GM18951 (cell line): ENCODE measurements at regions of chr12 and their contacts with region 1.

Region 1: GRCh38 chr12:121438905-121439304 is 39.0 kb downstream of the RNF34 start:
- POLR2A ChIP-seq: no peak

Region 2: GRCh38 chr12:121345151-121345815 is 93.6 kb before region 1 on chr12:
- in situ Hi-C with region 1: loop called (anchors 10 kb)
- POLR2A ChIP-seq: no peak

Region 3: DNA sequence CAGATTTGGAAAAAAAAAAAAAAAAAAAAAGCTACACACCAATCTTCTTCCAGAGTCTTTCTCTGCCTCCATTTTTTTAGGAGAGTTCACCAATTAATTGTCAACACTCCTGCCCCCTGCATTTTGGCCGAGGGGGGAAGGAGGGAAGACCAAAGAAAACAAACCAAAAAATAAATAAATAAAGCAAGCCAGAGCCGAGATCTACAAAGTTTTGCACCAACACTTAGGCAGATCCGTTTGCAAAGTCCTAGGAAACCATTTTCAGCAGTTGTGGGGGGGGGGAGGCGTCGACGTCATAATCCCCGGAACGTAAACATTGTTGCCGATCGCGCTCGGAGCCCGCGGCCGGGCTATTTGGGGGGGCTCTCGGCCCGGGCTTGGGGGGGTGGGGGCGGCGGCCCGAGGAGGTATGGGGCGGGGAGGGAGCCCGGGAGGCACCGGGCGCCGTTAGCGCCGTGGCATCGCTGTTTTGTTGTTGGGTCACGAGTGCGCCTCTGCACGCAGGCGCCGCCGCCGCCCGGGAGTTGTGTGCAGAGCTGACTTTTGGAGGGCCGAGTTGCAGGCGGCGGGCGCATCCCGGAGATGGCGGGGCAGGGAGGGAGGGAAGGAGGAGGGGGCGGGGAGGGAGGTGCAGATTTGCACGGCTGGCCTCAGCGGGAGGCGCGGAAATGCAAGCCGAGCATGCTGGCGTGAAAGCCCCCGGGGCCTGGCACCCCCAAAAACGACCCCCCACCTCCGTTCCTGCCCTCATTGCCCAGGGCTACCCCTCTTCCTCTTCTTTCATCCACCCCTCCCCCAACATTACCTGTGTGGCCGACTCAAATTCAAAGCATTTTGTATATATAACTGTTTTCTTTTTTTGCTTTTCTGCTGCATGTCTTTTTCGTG is 141.3 kb after region 1 on chr12:
- in situ Hi-C with region 1: no loop called
- POLR2A ChIP-seq: peak; percentile 53